Cardiac septum (tissue), 1 donor: ENCODE measurements at regions of chr1 and their contacts with region 1.

Region 1: DNA sequence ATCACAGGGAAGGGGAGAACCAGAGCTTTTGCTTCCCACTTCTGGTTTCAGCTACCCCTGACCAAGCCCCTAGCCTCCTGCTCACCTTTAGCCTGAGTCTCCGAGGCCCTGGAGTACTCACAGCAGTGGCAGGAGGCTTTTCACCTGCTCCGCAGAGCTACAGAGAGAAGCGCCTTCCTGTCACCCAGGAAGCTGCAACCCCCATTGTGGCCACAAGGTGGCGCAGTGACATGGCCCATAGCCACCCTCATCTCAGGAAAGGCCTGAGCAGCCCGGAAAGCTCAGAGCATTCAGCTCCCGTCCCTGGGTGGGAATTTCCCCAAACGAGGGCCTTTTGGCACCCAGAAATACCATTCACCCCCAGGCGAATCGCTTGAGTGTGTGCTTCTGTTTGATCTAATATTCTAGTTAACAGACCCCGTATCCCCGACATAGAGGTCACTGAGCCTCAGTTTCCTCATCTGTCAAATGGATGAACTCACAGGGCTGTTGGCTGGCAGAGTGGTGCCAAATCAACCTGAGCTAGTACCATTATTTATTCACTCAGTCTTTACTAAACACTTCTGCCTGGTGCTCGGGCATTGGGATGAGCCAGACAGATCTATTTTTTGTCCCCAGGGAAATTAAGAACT is 25.3 kb downstream of the A3GALT2 start:
- DNase-seq: peak; percentile 93

Region 2: DNA sequence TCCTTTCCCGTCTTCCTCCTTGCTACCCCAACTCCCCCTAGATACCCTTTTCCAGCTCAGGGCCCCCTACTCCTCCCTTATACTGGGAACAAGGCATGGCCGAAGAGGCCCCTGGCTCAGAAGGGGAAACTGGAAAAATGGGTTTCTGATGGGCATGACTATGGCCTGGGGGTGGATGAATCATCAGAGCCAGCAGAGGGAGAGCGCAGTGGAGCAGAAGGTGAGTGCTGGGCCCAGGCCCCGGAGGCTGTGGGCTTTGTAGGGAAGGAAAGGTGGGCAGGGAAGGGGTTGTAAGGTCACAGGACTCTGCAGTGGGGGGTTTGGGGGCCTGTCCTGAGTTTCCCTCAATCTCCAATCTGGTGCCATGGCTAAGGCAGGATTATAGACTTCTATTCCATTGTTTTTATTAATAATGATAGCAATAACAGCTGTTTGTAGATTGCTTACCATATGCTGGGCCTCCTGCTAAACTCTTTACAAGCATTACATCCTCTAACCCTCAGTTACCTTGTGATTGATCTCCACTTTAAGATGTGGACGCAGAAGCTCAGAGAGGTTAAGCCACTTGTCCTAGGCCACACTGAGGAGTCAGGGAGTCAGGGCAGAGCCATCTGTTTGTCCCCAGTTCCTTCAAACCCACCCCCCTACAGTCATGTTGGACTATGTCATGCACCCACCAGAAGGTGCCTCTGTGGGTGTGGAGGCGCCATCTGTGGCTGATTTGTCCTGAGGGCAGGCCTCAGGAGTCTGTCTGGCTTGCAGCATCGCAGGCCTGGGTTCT is 75.5 kb before region 1 on chr1:
- intact Hi-C with region 1: loop called (anchors 2 kb)
- DNase-seq: no peak

Region 3: GRCh38 chr1:33256701-33257399 is 38.7 kb before region 1 on chr1:
- intact Hi-C with region 1: loop called (anchors 5 kb)
- DNase-seq: peak; percentile 80

Region 4: DNA sequence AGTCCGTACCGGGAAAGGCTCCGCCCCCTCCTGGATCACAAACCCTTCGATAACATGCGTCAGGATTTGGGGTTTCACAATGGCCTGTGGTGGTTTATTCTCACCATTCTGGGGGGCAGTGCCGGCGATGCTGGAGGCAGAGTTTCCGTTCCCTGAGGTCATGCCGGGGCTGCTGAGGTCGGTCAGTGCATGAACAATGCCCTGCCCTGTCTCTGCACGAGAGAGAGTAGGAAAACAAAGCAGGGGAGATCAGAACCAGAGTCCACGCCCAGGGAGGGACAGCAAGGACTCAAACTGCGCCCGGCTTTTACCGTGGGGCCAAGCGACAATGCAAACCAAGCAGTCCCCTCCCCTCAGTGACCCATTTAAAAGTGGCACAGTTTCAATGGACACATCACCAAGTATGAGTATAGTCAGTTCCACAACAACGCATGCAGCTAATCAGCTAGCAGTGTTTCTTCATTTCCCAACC is 38.6 kb after region 1 on chr1:
- intact Hi-C with region 1: loop called (anchors 5 kb)
- DNase-seq: no peak

Region 5: GRCh38 chr1:33472349-33472980 is 176.9 kb after region 1 on chr1 and contains the start of gene ZSCAN20:
- intact Hi-C with region 1: loop called (anchors 1 kb)
- DNase-seq: peak; percentile 98
- total RNA-seq, gene ZSCAN20: 8.3 TPM

Region 6: DNA sequence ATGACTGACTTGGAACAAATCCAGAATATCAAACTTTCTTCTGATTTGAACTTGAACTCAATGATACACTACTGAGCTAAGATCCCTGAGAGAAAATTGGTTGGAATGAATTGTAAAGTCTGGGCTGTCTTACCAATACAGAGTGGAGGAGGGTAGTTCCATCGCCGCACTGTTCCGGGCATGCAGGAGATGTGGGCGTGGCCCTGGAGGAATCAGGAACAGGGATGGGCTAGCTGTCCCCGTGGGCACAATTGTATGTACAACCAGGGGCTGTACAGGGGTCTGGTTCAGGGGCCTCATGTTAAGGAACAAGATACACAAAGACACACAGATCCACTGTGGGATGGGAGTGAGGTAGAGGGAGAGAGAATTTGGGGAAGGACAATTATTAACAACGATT is 321.2 kb after region 1 on chr1:
- intact Hi-C with region 1: loop called (anchors 2 kb)
- DNase-seq: no peak